Mammary epithelial cell (primary cell): ENCODE measurements at regions of chr1 and their contacts with region 1.

Region 1: DNA sequence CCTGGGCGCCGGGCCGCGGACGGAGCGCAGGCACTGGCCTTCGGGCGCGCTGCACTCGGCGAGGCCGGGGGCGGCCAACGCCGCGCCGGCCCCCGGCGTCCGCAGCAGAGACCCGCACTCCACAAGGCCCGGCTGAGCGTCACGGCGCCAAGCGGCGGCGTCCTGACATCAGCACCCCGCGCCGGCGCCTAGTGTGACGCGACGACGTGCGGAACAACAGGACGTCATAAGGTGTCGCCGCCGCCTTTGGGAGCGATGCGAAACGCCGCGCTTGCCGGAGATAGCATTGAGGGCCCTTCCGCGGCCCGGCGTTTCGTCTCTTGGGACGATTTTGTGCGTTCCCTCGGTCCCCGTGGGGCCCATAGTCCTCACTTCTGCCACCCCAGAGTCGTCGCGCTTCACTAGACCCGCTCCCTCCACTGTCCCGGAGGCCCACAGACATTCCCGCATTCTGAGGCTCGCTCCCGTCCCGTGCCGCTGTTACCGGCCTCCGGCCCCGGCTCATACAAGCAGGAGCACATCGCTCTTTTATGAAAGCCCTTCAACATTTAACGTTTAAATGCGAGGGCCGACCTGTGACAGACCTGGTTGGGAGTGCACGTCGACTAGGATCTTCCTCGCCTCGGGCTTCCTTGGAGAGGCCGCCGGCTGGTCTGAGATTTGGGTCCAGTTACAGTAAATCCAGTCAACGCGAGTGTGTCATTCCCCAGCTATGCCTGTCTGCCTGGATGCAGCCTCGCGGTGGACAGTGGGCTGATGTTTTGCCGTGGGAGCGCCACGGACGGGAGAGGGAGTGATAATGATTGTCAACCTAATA is at the start of gene SSU72:
- DNase-seq: peak; percentile 87
- H3K4me3 ChIP-seq: peak within 1 kb of the TSS; percentile 90 to 99 (median 97)
- H3K27ac ChIP-seq: peak within 1 kb of the TSS; percentile 87
- H3K4me1 ChIP-seq: peaks cover 7% of the 10 kb centered on the region
- H3K27me3 ChIP-seq: no peaks in the 10 kb centered on the region
- CTCF ChIP-seq: no peak
- total RNA-seq, gene SSU72: 77.5 to 125 TPM

Region 2: DNA sequence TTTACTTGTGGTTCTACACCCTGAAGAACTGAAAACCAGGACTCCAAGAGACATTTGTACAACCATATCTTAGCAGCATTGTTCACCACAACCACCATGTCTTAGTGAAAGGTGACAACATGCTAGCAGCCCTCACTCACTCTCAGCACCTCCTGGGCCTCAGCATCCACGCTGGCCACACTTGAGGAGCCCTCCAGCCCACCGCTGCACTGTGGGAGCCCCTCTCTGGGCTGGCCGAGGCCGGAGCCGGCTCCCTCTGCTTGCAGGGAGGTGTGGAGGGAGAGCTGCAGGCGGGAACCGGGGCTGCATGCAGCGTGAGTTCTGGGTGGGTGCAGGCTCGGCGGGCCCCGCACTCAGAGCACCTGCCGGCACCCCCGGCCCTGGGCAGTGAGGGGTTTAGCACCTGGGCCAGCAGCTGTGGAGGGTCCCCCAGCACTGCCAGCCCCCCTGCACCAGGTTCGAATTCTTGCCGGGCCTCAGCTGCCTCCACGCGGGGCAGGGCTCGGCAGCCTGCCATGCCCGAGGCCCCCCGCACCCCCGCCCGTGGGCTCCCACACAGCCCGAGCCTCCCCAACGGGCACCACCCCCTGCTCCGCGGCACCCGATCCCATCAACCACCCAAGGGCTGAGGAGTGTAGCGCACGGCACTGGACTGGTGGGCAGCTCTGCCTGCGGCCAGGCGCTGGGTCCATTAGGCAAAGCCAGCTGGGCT is 468.3 kb before region 1 on chr1:
- CTCF ChIA-PET with region 1: no interaction called
- dilution Hi-C with region 1: no loop called
- in situ Hi-C with region 1: no loop called
- intact Hi-C with region 1: no loop called
- DNase-seq: no peak
- H3K4me3 ChIP-seq: no peak overlapping the region
- H3K27ac ChIP-seq: no peak overlapping the region
- H3K4me1 ChIP-seq: no peaks in the 10 kb centered on the region
- H3K27me3 ChIP-seq: no peaks in the 10 kb centered on the region
- CTCF ChIP-seq: no peak

Region 3: DNA sequence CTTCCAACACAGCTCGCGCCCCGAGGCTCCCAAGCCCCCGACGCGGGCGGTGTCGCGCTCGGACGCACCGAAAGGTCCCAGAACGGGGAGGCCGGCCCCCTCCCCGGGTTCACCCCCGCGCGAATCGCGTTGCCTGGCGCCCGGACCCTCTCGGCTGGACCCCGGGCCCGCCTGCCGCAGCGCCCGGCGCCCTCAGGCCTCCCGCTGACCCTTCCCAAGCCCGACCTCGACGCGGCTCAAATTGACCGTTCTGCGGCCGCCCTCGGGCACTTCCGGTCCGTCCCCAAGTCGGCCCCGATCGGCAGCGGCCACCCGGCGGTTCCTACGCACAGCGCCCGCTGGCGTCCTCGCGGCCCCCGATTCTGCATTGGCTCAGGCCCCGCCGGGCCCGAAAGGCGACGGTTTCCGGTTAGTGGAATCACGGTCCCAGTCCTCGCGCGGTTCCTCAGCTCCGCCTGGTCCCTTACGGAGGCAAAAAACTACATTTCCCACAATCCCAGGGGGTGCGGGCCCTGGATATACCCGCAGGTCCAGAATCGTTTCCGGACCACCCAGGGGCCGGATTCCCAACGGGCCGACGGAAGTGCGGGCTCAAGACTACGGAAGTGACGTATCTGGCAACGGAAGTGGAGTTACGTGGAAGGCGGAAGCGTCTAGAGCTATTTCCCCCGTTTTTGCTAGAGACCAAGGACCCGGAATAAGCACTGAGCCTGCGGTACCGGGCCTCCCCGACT is 199.8 kb before region 1 on chr1 and contains the start of gene AURKAIP1:
- CTCF ChIA-PET with region 1: no interaction called
- dilution Hi-C with region 1: no loop called
- in situ Hi-C with region 1: no loop called
- intact Hi-C with region 1: no loop called
- DNase-seq: peak; percentile 100
- H3K4me3 ChIP-seq: peak within 1 kb of the TSS; percentile 88 to 95 (median 92)
- H3K27ac ChIP-seq: peak within 1 kb of the TSS; percentile 76
- H3K4me1 ChIP-seq: peaks cover 27% of the 10 kb centered on the region
- H3K27me3 ChIP-seq: no peaks in the 10 kb centered on the region
- CTCF ChIP-seq: peak in 1 of 2 donors; percentile 52
- total RNA-seq, gene AURKAIP1: 85.0 to 167 TPM

Region 4: GRCh38 chr1:1471389-1472052 is 103.4 kb before region 1 on chr1 and contains the start of gene ATAD3B:
- CTCF ChIA-PET with region 1: no interaction called
- dilution Hi-C with region 1: no loop called
- in situ Hi-C with region 1: no loop called
- intact Hi-C with region 1: loop called (anchors 1 kb)
- DNase-seq: peak; percentile 91
- H3K4me3 ChIP-seq: peak within 1 kb of the TSS; percentile 76 to 86 (median 84)
- H3K27ac ChIP-seq: peak within 1 kb of the TSS; percentile 70
- H3K4me1 ChIP-seq: peaks cover 9% of the 10 kb centered on the region
- H3K27me3 ChIP-seq: no peaks in the 10 kb centered on the region
- CTCF ChIP-seq: no peak
- total RNA-seq, gene ATAD3B: 13.3 to 61.9 TPM

Region 5: GRCh38 chr1:1483714-1484113 is 91.2 kb before region 1 on chr1:
- CTCF ChIA-PET with region 1: no interaction called
- dilution Hi-C with region 1: no loop called
- in situ Hi-C with region 1: no loop called
- intact Hi-C with region 1: no loop called
- DNase-seq: no peak
- H3K4me3 ChIP-seq: no peak overlapping the region
- H3K27ac ChIP-seq: no peak overlapping the region
- H3K4me1 ChIP-seq: no peaks in the 10 kb centered on the region
- H3K27me3 ChIP-seq: no peaks in the 10 kb centered on the region
- CTCF ChIP-seq: no peak

Region 6: GRCh38 chr1:1615256-1616044 is 40.5 kb after region 1 on chr1 and contains the start of gene MIB2:
- CTCF ChIA-PET with region 1: no interaction called
- dilution Hi-C with region 1: no loop called
- in situ Hi-C with region 1: no loop called
- intact Hi-C with region 1: loop called (anchors 2 kb)
- DNase-seq: peak; percentile 92
- H3K4me3 ChIP-seq: peak within 1 kb of the TSS; percentile 91 to 99 (median 93)
- H3K27ac ChIP-seq: peak within 1 kb of the TSS; percentile 89
- H3K4me1 ChIP-seq: peaks cover 17% of the 10 kb centered on the region
- H3K27me3 ChIP-seq: no peaks in the 10 kb centered on the region
- CTCF ChIP-seq: no peak
- total RNA-seq, gene MIB2: 44.8 to 48.5 TPM

Region 7: DNA sequence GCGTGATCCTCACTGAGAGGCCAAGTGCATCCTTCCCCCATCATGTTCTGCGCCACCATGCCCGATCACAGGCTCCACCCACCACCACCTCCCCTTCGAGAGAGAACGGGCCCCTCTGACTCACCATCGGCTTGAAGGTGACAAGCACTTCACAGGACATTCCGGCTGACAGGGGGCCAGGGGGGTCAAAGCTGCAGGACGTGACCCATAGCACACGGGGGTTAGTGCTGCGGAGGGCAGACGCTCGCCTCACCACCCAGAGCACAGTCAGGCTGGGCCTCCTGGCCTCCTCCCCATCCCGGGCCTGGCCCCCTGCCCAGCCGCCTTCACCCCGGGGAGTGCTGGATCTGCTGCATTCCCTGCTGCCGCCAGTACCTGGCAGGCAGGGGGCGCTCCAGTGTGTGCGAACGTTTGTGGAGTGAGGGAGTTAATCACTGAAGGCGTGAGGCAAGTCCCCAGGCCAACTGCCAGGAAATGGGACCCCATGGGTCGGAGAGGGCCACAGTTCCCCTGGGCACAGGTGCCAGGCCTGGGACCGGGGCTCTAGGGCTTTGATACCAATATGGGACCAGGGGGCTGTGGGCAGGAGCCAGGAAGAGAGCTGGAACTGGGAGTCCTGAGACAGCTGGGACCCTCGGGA is 385.0 kb after region 1 on chr1:
- CTCF ChIA-PET with region 1: no interaction called
- dilution Hi-C with region 1: no loop called
- in situ Hi-C with region 1: no loop called
- intact Hi-C with region 1: no loop called
- DNase-seq: peak; percentile 69
- H3K4me3 ChIP-seq: no peak overlapping the region
- H3K27ac ChIP-seq: no peak overlapping the region
- H3K4me1 ChIP-seq: peaks cover 6% of the 10 kb centered on the region
- H3K27me3 ChIP-seq: peaks cover 7% of the 10 kb centered on the region
- CTCF ChIP-seq: peak; percentile 85 to 95